Activated CD8-positive, alpha-beta T cell treated with anti-CD3 and anti-CD28 coated beads, Interleukin-2, amount 10 ng/mL, durations not matched to agents 7 days and 5 days (primary cell): ENCODE measurements at regions of chr6 and their contacts with region 1.

Region 1: DNA sequence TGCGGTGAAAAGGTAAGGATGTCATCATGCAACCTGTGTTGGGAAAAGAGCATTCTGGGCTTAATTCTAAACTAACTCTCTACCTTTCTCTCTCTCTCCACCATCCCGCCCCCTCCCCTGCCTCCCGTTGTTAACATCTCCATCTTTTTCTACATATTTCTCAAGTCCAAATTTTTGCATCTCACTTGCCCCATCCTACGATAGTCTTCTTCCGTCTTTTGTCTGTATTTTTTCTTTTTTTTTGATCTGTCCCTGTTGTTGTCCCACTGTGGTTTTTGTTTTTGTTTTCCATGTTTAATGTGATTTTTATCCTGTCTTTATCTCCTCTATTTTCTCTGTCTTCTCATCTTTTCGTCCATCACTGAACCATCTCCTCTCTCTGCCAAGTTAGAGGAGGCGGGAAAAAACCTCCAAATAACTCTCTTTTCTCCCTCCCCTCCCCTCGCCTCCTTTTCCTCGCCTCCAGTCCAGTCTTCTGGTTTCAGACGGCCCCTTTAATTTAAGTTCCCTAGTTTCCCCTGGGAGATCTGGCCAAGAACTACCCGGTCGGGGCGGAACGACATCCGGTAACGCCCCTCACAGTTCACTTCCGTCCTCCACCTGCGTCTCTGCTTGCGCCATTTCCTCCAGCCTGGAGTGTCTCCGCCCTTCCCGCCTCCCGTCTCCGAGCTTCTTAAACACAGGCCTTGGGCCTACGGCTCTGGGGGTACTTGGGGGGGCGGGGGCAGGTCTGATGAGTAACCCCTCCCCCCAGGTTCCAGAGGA is at the start of gene NFKBIL1:
- DNase-seq: peak; percentile 96
- ATAC-seq: peak; percentile 89
- H3K4me3 Mint-ChIP-seq: peak within 1 kb of the TSS; percentile 84
- H3K27ac Mint-ChIP-seq: peak within 1 kb of the TSS; percentile 90
- H3K4me1 Mint-ChIP-seq: peaks cover 56% of the 10 kb centered on the region
- H3K27me3 Mint-ChIP-seq: no peaks in the 10 kb centered on the region
- total RNA-seq, gene NFKBIL1: 13.5 to 14.2 TPM

Region 2: GRCh38 chr6:31441365-31442267 is 105.5 kb before region 1 on chr6:
- CTCF ChIA-PET with region 1: no interaction called
- POLR2A ChIA-PET with region 1: no interaction called
- DNase-seq: peak; percentile 88
- ATAC-seq: peak; percentile 98
- H3K4me3 Mint-ChIP-seq: no peak overlapping the region
- H3K27ac Mint-ChIP-seq: no peak overlapping the region
- H3K4me1 Mint-ChIP-seq: peaks cover 6% of the 10 kb centered on the region
- H3K27me3 Mint-ChIP-seq: peaks cover 56% of the 10 kb centered on the region

Region 3: DNA sequence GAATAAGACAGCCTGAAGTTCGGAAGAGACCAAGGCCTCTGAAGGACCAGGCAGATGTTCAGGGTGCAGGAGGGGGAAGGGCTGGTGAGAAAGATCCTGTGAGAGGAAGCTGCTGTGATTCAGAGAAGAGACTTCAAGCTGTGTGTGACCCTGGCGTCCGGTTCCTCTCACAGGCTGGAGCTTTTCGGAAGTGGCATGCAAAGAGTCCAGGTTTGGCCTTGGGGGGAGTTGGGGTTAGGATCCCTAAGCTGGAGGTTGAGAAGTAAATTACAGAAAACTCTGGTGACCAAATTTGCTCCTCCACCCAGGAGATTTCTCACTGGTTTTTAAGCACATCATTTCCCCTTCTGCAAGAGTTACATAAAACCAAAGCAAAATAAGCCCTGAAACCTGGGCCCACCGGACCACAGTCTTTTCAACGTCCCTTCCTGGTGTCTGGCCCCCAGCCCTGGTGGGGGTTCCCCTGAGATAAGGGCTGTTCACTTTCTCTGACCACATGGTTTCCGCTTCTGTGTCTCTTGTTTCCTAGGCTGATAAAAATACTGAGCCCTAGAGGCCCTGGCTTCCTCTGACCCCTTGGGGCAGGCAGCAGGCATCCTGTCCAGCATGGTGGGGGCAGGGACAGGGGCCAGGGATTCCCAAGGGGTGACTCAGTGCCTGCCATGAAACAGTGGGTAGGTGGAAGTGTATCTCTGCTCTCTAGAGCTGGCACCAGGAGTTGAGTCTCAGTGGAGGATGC is 13.0 kb after region 1 on chr6:
- CTCF ChIA-PET with region 1: interaction called, 17 read pairs
- POLR2A ChIA-PET with region 1: interaction called, 6 read pairs
- DNase-seq: peak; percentile 75
- ATAC-seq: peak; percentile 70
- H3K4me3 Mint-ChIP-seq: peak overlapping the region; percentile 65
- H3K27ac Mint-ChIP-seq: peak overlapping the region; percentile 82
- H3K4me1 Mint-ChIP-seq: peaks cover 65% of the 10 kb centered on the region
- H3K27me3 Mint-ChIP-seq: peaks cover 19% of the 10 kb centered on the region

Region 4: GRCh38 chr6:31575335-31575901 is 28.3 kb after region 1 on chr6 and contains the start of gene TNF:
- CTCF ChIA-PET with region 1: interaction called, 504 read pairs
- POLR2A ChIA-PET with region 1: interaction called, 62 read pairs
- DNase-seq: peak; percentile 86
- ATAC-seq: peak; percentile 38
- H3K4me3 Mint-ChIP-seq: peak within 1 kb of the TSS; percentile 93
- H3K27ac Mint-ChIP-seq: peak within 1 kb of the TSS; percentile 96
- H3K4me1 Mint-ChIP-seq: peaks cover 89% of the 10 kb centered on the region
- H3K27me3 Mint-ChIP-seq: no peaks in the 10 kb centered on the region
- total RNA-seq, gene TNF: 53.4 to 55.0 TPM

Region 5: GRCh38 chr6:31580807-31581433 is 33.8 kb after region 1 on chr6:
- CTCF ChIA-PET with region 1: interaction called, 504 read pairs
- POLR2A ChIA-PET with region 1: interaction called, 62 read pairs
- DNase-seq: peak; percentile 90
- ATAC-seq: peak; percentile 70
- H3K4me3 Mint-ChIP-seq: peak overlapping the region; percentile 98
- H3K27ac Mint-ChIP-seq: peak overlapping the region; percentile 88
- H3K4me1 Mint-ChIP-seq: peaks cover 72% of the 10 kb centered on the region
- H3K27me3 Mint-ChIP-seq: no peaks in the 10 kb centered on the region

Region 6: DNA sequence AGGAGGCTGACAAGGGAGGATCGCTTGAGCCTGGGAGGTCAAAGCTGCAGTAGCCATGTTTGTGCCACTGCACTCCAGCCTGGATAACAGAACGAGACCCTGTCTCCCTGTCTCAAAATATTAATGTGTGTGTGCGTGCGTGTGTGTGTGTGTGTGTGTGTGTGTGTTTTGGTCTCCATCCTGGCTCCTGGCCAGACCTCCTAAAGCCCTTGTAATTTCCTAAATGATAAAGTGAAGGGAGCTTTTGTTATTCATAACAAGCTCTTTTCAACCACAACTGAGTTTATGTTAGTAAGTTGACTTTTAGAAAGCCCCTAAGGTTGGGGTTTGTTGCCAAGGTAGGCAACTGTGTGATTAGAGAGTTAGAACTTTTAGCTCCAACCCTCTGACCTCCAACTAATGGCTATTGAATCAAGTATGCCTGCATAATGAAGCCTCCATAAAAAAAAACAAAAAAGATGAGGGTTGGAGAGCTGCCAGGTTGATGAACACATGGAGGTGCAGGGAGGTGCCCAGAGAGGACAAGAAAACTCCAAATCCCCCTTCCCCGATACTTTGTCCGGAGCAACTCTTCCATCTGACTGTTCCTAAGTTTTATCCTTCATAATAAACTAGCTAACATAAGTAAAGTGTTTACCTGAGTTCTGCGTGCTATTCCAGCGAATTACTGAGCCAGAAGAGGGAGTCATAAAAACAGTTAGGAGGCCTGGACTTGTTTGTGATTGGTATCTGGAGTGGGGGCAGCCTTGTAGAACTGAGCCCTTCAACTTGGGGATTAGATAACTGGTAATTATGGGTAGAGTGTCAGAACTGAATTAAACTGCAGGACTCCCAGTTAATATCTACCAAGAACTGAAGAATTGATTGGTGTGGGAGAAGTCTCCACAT is 62.6 kb after region 1 on chr6:
- CTCF ChIA-PET with region 1: interaction called, 18 read pairs
- POLR2A ChIA-PET with region 1: no interaction called
- DNase-seq: no peak
- ATAC-seq: no peak
- H3K4me3 Mint-ChIP-seq: no peak overlapping the region
- H3K27ac Mint-ChIP-seq: no peak overlapping the region
- H3K4me1 Mint-ChIP-seq: peaks cover 15% of the 10 kb centered on the region
- H3K27me3 Mint-ChIP-seq: no peaks in the 10 kb centered on the region

Region 7: DNA sequence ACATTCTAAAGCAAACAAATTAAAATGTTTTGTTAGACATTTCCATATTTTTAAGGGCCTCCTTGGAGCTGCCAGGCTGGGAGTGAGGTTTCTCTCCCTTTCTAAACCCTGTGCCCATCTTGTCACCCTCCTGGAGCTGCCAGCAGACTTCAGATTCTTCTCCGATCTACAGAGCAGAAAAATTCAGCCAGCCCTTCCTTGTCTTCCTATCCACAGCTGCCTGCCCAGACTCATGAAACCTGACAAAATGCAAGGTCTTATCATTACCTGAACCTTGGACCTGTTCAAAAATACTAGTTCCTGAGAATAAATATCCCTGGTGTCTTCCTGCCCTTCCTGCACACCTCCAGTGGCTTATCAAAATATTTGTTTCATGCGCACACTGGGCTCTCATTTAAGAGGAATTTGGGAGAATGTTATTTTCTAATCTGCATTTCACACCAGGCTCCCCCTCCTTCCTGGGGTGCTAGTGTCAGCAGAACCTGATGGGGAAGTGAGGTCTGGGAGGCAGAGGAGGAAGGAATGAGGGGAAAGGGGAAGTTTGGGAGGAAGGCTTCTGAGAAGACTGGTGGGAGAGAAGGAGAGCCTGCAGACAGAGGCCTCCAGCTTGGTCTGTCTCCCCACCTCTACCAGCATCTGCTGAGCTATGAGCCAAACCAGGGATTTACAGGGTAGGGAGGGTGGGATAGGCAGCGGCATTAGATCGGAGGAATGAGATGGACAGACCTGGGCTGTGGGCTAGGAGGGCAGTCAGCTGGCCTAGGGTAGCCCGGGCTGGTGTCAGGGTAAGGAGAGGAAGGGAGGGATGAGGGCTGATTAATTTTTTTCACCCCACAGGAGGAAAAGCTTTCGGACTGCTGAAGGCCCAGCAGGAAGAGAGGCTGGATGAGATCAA is 67.8 kb after region 1 on chr6 and contains the start of gene AIF1:
- CTCF ChIA-PET with region 1: interaction called, 18 read pairs
- POLR2A ChIA-PET with region 1: interaction called, 17 read pairs
- DNase-seq: no peak
- ATAC-seq: no peak
- H3K4me3 Mint-ChIP-seq: peak within 1 kb of the TSS; percentile 94
- H3K27ac Mint-ChIP-seq: peak within 1 kb of the TSS; percentile 96
- H3K4me1 Mint-ChIP-seq: peaks cover 45% of the 10 kb centered on the region
- H3K27me3 Mint-ChIP-seq: no peaks in the 10 kb centered on the region
- total RNA-seq, gene AIF1: 177 TPM